ENCODE measurements at regions of chr1 and their contacts with region 1.

Region 1: GRCh38 chr1:96966536-96967138 is 245.1 kb downstream of the PTBP2 start:
- DNase-seq: peak; percentile 62 to 78
- H3K4me3 ChIP-seq: no peak overlapping the region
- H3K4me3 Mint-ChIP-seq: peak overlapping the region; percentile 54
- H3K27ac Mint-ChIP-seq: peak overlapping the region; percentile 63
- H3K4me1 ChIP-seq: peaks cover 25% of the 10 kb centered on the region
- H3K4me1 Mint-ChIP-seq: no peaks in the 10 kb centered on the region
- H3K27me3 ChIP-seq: no peaks in the 10 kb centered on the region
- H3K27me3 Mint-ChIP-seq: no peaks in the 10 kb centered on the region
- CTCF ChIP-seq: peak; percentile 69 to 82

Region 2: GRCh38 chr1:96934282-96934681 is 32.4 kb before region 1 on chr1:
- CTCF ChIA-PET with region 1: no interaction called
- POLR2A ChIA-PET with region 1: no interaction called
- intact Hi-C with region 1: loop called (anchors 1 kb)
- DNase-seq: peak; percentile 48 to 61
- H3K4me3 ChIP-seq: no peak overlapping the region
- H3K4me3 Mint-ChIP-seq: no peak overlapping the region
- H3K27ac Mint-ChIP-seq: no peak overlapping the region
- H3K4me1 ChIP-seq: peaks cover 32% of the 10 kb centered on the region
- H3K4me1 Mint-ChIP-seq: peaks cover 15% of the 10 kb centered on the region
- H3K27me3 ChIP-seq: no peaks in the 10 kb centered on the region
- H3K27me3 Mint-ChIP-seq: no peaks in the 10 kb centered on the region
- CTCF ChIP-seq: no peak

Region 3: GRCh38 chr1:97017895-97018294 is 51.3 kb after region 1 on chr1:
- CTCF ChIA-PET with region 1: no interaction called
- POLR2A ChIA-PET with region 1: no interaction called
- intact Hi-C with region 1: loop called (anchors 2 kb)
- DNase-seq: peak; percentile 13 to 28
- H3K4me3 ChIP-seq: no peak overlapping the region
- H3K4me3 Mint-ChIP-seq: no peak overlapping the region
- H3K27ac Mint-ChIP-seq: no peak overlapping the region
- H3K4me1 ChIP-seq: no peaks in the 10 kb centered on the region
- H3K4me1 Mint-ChIP-seq: no peaks in the 10 kb centered on the region
- H3K27me3 ChIP-seq: no peaks in the 10 kb centered on the region
- H3K27me3 Mint-ChIP-seq: no peaks in the 10 kb centered on the region
- CTCF ChIP-seq: peak in 1 of 2 experiments; percentile 10

Region 4: DNA sequence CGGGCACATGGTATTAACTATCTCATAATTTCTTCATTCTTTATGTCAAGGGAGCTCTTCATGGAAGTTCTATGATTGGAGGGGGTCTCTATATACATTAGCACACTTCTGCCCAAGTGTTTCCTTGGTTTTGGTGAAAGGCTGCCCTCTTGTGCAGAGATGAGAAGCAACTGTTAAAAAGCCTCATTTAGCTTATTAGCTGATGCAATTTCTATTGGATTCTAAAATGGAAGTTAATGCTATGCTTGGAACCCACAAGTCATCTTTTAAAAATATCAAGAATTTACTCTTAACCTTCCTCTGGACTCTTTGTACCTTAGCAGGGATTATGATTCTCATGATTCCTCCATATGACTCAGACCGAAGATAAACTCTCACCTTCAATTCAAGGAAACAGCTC is 83.9 kb after region 1 on chr1:
- CTCF ChIA-PET with region 1: no interaction called
- POLR2A ChIA-PET with region 1: no interaction called
- intact Hi-C with region 1: loop called (anchors 1 kb)
- DNase-seq: peak in 1 of 2 experiments; percentile 7
- H3K4me3 ChIP-seq: no peak overlapping the region
- H3K4me3 Mint-ChIP-seq: no peak overlapping the region
- H3K27ac Mint-ChIP-seq: no peak overlapping the region
- H3K4me1 ChIP-seq: no peaks in the 10 kb centered on the region
- H3K4me1 Mint-ChIP-seq: no peaks in the 10 kb centered on the region
- H3K27me3 ChIP-seq: no peaks in the 10 kb centered on the region
- H3K27me3 Mint-ChIP-seq: no peaks in the 10 kb centered on the region
- CTCF ChIP-seq: peak; percentile 2 to 16